Psoas muscle (tissue), 8 donors: ENCODE measurements at regions of chr4 and their contacts with region 1.

Region 1: GRCh38 chr4:76257824-76258223 is 6.3 kb downstream of the FAM47E start:
- DNase-seq: no peak
- ATAC-seq: no peak
- H3K4me3 ChIP-seq: no peak overlapping the region
- H3K27ac ChIP-seq: no peak overlapping the region
- H3K4me1 ChIP-seq: no peaks in the 10 kb centered on the region
- H3K27me3 ChIP-seq: no peaks in the 10 kb centered on the region
- CTCF ChIP-seq: no peak

Region 2: DNA sequence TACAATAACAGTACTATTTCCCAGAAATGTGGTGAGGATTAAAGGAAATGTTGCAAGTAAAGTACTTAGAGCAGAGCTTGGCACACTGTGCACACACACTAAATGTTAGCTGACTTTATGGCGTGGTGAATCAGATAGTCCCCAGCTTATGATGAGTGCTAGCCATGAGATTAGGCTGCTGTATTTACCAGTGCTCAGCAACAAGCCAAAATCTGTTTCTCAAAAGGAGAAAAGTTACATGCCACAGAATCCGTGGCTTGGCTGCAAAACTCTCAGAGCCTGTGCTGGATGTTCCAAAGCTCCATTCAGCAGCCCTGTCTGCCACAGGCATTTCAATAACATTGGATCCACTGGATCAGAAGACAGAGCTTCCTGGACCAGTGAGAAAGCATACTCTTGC is 35.9 kb after region 1 on chr4:
- intact Hi-C with region 1: loop called (anchors 5 kb)
- DNase-seq: no peak
- ATAC-seq: peak in 3 of 4 donors; percentile 35 to 68 (median 41)
- H3K4me3 ChIP-seq: no peak overlapping the region
- H3K27ac ChIP-seq: no peak overlapping the region
- H3K4me1 ChIP-seq: peaks cover 9% of the 10 kb centered on the region
- H3K27me3 ChIP-seq: no peaks in the 10 kb centered on the region
- CTCF ChIP-seq: no peak

Region 3: GRCh38 chr4:76326515-76326914 is 68.7 kb after region 1 on chr4:
- intact Hi-C with region 1: no loop called
- DNase-seq: no peak
- ATAC-seq: no peak
- H3K4me3 ChIP-seq: no peak overlapping the region
- H3K27ac ChIP-seq: no peak overlapping the region
- H3K4me1 ChIP-seq: no peaks in the 10 kb centered on the region
- H3K27me3 ChIP-seq: no peaks in the 10 kb centered on the region
- CTCF ChIP-seq: no peak

Region 4: GRCh38 chr4:76485450-76485849 is 227.6 kb after region 1 on chr4:
- intact Hi-C with region 1: loop called in 1 of 2 experiments (anchors 5 kb)
- DNase-seq: no peak
- ATAC-seq: no peak
- H3K4me3 ChIP-seq: no peak overlapping the region
- H3K27ac ChIP-seq: no peak overlapping the region
- H3K4me1 ChIP-seq: no peaks in the 10 kb centered on the region
- H3K27me3 ChIP-seq: no peaks in the 10 kb centered on the region
- CTCF ChIP-seq: no peak